ENCODE measurements at regions of chr2 and their contacts with region 1.

Region 1: DNA sequence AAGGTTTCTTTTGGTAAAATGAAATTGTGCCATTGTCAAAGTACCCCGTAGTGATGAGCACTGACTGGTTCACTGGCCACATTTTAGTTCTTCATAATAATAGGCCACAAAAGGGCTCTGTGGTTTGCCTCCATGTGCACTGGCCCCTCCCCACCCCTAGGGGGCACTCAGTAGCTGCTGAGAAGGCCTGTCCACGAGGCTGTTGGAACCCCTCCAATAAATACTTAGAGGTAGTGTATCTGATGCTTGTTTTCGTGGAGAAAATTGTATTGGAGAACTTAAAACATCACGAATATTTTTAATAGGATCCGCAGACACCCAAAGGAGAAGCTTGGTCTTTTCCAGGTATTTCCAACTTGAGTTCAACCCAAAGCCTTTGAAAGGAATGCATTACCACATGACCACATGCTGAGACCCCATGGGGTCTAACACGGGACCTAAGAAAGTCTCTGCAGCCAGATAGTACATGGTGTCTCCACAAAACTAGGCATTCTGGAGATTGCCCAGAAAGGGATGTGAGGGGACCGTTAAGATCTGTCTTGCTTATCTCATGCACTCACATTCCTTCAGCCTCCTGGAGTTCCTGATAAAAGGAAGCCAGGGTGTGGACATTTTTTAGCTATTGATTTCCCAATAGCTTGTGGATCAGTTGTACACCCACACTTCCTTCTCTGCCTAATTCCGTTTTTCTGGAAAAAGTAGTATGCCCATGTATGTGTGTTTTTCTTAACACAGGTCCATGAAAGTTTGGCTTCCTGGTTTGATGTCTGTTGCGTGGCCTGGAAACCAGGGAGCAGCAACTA is 28.5 kb upstream of the NOSTRIN start:
- DNase-seq: peak; percentile 85
- H3K4me3 Mint-ChIP-seq: no peak overlapping the region
- H3K27ac Mint-ChIP-seq: no peak overlapping the region
- H3K4me1 Mint-ChIP-seq: no peaks in the 10 kb centered on the region
- H3K27me3 Mint-ChIP-seq: no peaks in the 10 kb centered on the region
- CTCF ChIP-seq: peak; percentile 94

Region 2: GRCh38 chr2:168678153-168678853 is 95.6 kb before region 1 on chr2:
- CTCF ChIA-PET with region 1: no interaction called
- intact Hi-C with region 1: no loop called
- DNase-seq: no peak
- H3K4me3 Mint-ChIP-seq: no peak overlapping the region
- H3K27ac Mint-ChIP-seq: no peak overlapping the region
- H3K4me1 Mint-ChIP-seq: peaks cover 7% of the 10 kb centered on the region
- H3K27me3 Mint-ChIP-seq: no peaks in the 10 kb centered on the region
- CTCF ChIP-seq: no peak

Region 3: DNA sequence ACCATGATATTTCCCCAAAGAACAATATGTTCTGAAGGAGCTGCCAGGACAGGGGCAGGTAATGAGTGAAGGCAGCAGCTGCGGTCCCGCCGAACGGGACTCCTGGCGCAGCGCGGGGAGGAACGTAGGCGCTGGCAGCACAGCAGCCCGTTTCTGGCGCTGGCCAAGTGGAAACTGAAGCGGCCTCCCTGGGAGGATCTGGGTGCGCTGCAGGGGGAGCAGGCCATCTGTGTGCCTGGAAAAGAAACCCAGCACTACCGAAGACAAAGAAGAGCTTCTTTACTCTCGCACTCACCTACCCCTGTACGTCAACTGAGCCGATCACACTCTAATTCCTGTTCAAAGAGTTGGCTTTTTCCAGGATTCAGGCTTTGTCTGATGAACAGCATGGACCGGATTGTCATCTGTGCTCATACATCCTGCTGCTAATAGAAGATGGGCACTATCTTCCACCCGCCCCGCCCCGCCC is 139.0 kb after region 1 on chr2:
- CTCF ChIA-PET with region 1: no interaction called
- intact Hi-C with region 1: loop called (anchors 2 kb)
- DNase-seq: peak; percentile 66
- H3K4me3 Mint-ChIP-seq: peak overlapping the region; percentile 62
- H3K27ac Mint-ChIP-seq: no peak overlapping the region
- H3K4me1 Mint-ChIP-seq: peaks cover 14% of the 10 kb centered on the region
- H3K27me3 Mint-ChIP-seq: peaks cover 27% of the 10 kb centered on the region
- CTCF ChIP-seq: no peak

Region 4: DNA sequence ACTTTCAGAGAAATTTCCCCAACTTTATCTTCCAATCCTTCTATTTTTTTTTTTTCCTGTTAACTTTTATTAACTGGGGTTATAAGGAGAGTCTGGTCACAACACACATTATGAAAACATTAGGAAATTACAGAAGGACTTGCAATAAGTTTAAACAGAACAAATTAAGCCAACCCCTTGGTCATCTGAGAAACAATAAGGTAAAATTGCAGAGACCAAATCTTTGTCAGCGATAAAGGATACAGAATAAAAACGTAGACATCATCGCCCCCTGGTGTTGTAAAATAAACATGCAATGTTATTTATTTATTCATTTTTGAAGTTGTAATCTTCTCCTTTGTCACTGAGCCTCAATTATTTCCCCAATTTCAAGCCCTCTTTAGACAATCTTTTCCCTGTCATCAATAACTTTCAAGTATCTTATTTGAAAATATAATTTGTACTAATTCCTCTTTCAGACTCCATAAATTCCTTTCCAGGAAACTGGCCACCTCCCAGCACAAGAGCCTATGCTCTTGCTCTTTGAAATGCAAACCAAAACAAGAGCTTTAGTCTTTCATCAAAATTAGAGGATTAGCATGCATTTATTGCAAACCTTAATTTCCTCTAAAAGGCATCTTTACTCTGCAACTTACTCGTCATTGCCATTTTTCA is 146.7 kb after region 1 on chr2:
- CTCF ChIA-PET with region 1: interaction called, 3 read pairs
- intact Hi-C with region 1: loop called (anchors 1 kb)
- DNase-seq: peak; percentile 44
- H3K4me3 Mint-ChIP-seq: no peak overlapping the region
- H3K27ac Mint-ChIP-seq: no peak overlapping the region
- H3K4me1 Mint-ChIP-seq: peaks cover 14% of the 10 kb centered on the region
- H3K27me3 Mint-ChIP-seq: no peaks in the 10 kb centered on the region
- CTCF ChIP-seq: peak; percentile 68

Region 5: DNA sequence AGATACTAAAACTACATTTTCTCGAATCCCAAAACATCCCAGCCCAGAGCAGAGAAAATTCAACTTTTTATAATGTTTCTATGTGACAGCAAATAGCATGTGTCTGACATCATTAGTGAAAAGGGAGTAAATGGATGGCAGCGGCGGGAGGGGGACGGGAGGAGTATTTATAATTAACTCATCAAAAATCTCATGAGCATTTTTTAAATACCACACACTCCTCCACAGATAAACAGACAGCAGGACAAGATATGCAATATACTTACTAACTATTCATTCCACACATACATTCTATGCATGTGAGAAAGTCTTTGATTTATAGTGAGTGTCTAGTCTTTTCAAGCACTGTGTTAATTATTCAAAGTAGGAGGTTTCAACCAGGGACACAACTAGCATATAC is 480.8 kb after region 1 on chr2:
- CTCF ChIA-PET with region 1: no interaction called
- intact Hi-C with region 1: no loop called
- DNase-seq: no peak
- H3K4me3 Mint-ChIP-seq: no peak overlapping the region
- H3K27ac Mint-ChIP-seq: no peak overlapping the region
- H3K4me1 Mint-ChIP-seq: no peaks in the 10 kb centered on the region
- H3K27me3 Mint-ChIP-seq: peaks cover 8% of the 10 kb centered on the region
- CTCF ChIP-seq: no peak